HepG2 (cell line): ENCODE measurements at regions of chr13 and their contacts with region 1.

Region 1: GRCh38 chr13:49914947-49915346 is 21.2 kb downstream of the SPRYD7 start:
- DNase-seq: no peak
- ATAC-seq: no peak
- H3K4me3 ChIP-seq: no peak overlapping the region
- H3K27ac ChIP-seq: no peak overlapping the region
- H3K4me1 ChIP-seq: 0 out of 2 replicates have a peak, but pooled peaks cover 6% of the 10 kb centered on the region
- H3K27me3 ChIP-seq: no peaks in the 10 kb centered on the region
- CTCF ChIP-seq: no peak
- EP300 ChIP-seq: no peak
- POLR2A ChIP-seq: no peak
- RAD21 ChIP-seq: no peak

Region 2: DNA sequence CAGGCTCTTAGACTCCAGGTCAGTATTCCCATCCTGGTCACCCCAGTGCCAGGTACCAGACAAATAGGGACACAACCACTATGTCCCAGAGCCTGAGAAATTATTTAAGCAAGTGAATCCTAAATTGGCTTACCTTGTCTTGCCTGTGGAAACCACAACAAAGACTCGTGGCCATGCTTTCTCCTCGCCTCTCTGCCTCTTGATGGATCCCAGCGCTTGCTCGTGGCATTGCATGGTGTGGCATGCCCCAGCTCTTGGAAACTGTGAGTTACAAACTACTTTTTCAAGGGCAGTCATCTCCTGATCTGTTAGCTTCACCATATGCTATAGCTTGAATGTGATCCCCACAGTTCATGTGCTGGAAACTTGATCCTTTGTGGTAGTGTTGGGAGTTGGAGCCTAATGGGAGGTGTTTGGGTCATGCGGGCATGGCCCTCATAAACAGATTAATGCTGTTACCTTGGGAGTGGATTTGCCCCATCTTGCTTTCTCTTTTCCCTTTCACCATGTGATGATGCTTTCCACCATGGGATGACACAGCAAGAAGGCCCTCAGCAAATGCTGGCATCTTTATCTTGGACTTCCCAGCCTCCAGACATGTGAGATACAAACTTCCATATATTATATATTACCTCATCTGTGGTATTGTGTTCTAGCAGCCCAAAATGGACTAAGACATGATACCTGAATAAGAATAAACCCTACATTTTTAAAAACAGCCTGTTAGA is 10.1 kb before region 1 on chr13:
- CTCF ChIA-PET with region 1: no interaction called
- POLR2A ChIA-PET with region 1: no interaction called
- in situ Hi-C with region 1: no loop called
- intact Hi-C with region 1: loop called (anchors 1 kb)
- DNase-seq: no peak
- ATAC-seq: no peak
- H3K4me3 ChIP-seq: no peak overlapping the region
- H3K27ac ChIP-seq: no peak overlapping the region
- H3K4me1 ChIP-seq: 0 out of 2 replicates have a peak, but pooled peaks cover 7% of the 10 kb centered on the region
- H3K27me3 ChIP-seq: no peaks in the 10 kb centered on the region; a peak in 1 of 5 replicates
- CTCF ChIP-seq: no peak
- EP300 ChIP-seq: no peak
- POLR2A ChIP-seq: no peak
- RAD21 ChIP-seq: no peak